ENCODE measurements at regions of chr12 and their contacts with region 1.

Region 1: GRCh38 chr12:107607464-107608392 is 77.9 kb upstream of the PWP1 start:
- DNase-seq: peak; percentile 86
- ATAC-seq: peak; percentile 90

Region 2: DNA sequence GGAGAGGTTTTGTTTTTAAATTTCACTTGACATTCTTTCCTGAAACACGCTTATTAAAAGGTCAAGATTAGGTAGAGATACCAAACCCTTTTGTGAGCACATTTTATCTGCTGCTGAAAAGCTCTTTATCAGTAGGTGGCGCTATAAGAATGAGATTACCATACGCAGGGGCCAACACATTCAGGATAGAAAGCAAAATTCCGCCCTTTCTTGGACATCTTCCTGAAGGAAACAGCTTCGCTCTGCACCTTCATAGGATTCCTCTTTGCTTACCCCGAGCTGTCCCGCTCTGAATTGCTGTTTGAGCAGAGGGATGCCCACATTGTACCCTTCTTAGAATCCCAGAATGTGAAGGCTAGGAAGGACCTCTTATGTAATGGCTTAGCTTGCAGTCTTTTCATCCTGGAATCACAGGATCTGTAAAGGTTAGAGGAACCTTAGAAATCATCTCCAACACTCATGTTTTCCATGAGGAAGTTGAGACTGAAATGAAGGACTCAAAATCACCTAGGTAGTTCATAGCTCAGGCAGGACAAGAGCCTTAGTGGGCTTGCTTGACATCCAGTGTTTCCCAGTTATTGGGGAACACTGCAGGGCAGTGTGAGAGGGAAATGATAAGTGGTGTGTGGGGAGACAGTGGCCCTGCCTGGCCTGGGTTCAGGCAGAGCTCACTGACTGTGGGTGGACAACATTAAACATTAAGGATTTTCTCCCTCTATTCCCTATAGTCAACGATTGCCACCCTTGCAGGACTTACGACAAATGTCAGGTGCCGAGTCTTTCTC is 475.7 kb before region 1 on chr12:
- intact Hi-C with region 1: loop called (anchors 2 kb)
- DNase-seq: no peak
- ATAC-seq: peak; percentile 61

Region 3: DNA sequence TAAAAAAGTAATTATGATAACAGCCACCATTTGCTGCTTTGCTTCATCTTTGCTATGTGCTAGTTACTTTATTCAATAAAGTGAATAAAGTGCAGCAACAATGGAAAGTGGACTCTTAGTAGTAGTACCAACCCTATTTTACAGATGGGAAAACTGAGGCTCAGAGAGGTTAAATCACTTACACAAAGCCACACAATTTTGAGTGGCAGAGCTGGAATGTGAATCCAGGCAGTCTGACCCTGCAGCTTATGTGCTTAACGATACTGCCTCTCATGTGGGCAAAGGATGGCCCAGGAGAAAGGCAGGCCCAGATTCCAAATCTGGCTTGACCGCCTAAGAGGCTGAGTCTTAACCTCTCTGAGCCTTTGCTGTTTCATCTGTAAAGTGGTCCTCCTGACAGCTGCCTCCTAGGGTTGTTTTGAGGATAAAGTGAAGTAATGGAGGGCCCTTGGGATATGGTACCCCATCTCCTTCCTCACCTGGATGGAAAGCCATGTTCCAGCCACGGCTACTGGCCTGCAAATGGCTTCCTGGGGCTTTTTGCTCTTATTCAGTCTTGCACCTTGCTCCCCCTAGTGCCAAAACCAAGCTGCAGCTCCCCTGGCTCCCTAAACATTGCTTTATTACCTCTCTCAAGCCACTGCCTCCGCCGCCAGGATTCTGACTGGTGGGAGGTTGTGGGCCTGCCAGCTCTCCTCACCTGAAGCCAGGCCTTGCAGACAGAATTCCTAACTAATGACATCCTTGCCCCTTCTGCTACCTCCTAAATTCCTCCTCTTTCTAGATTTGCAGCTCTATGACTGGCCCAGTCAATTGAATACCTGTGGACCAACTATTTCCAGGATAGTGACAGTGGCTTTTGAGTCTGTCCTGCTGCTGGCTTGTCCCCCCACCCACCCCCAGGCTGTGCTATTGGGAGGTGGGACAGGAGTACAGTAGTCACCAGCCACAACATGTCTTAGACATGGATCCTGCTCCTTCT is 205.4 kb before region 1 on chr12:
- intact Hi-C with region 1: loop called (anchors 10 kb)
- DNase-seq: no peak
- ATAC-seq: no peak

Region 4: DNA sequence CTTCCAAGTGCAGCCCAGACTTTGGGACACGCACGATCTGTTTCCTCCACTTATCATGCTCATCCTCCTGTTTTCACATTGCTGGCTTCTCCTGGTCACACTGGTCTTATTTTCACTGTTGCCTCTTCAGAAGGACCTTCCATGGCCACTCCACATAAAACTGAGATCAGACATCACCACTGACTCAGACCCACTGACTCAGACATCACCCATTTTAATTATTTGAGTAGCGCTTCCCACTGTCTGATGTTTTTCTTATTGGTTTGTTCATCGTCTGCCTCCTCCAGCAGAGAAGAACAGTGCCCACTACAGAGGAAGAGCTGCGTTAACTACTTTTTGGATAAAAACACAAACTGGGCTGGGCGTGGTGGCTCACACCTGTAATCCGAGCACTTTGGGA is 192.7 kb before region 1 on chr12:
- intact Hi-C with region 1: no loop called
- DNase-seq: no peak
- ATAC-seq: no peak

Measured in Right ventricle myocardium superior (tissue), 1 donor.